ENCODE measurements at regions of chrX and their contacts with region 1.

Region 1: DNA sequence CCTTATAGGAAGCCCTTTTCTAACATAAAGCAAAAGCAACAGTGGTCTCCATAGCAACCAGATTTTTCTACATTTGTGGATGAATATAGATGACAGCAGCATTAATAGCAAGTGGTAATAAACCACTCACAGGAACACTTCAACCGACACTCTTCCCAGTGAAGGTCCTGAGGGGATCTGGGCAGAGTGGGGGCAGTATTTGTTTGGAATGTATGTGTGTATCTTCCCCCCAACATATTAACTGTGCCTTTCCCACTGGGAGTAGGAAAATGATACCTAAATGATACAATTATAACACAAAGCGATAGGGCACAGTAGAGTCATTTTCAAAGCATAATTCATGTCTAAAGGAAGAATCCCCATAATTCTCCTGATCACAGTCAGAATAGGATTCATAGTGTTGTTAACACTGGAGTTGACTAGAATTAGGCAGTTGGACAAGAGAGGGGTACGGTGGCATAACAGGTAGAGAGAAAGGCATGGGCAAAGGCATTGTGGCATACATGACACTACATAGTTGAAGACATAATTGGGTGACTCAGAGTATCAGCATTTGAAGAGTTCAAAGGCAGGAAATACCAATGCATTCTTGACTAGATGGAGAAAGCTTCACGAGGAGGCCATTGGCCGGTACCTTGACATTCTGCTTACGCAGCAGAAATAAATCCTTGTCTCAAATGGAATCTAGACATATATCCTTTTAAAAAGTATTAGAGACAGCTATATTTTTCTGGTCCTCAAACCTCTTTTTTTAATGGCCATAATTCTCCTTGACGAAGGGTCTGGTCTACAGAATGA is 15.2 kb downstream of the CAPN6 start:
- DNase-seq: no peak
- ATAC-seq: no peak
- H3K4me3 ChIP-seq: no peak overlapping the region
- H3K27ac ChIP-seq: no peak overlapping the region
- H3K4me1 ChIP-seq: no peaks in the 10 kb centered on the region
- H3K27me3 ChIP-seq: no peaks in the 10 kb centered on the region

Region 2: GRCh38 chrX:110920991-110921390 is 334.1 kb before region 1 on chrX:
- intact Hi-C with region 1: no loop called
- DNase-seq: no peak
- ATAC-seq: no peak
- H3K4me3 ChIP-seq: no peak overlapping the region
- H3K27ac ChIP-seq: no peak overlapping the region
- H3K4me1 ChIP-seq: no peaks in the 10 kb centered on the region
- H3K27me3 ChIP-seq: no peaks in the 10 kb centered on the region

Region 3: DNA sequence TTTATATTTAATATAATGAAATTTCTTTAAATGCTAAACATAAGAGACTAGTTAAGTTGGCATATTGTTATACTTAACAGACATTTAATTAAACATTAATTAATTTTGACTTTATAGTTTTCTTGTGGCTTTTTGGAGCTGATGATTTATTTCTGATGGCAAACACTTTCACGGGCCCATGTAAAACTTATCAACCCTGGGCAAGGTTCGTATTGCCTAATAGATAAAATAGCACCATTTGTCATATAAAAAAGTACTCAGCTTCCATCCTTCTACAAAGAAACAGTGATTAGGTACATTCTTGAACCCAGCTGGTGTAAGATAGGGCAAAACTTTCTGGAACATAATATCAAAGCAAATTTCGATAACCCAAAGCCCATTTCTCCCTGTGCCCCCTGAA is 95.9 kb before region 1 on chrX:
- intact Hi-C with region 1: loop called in 1 of 2 experiments (anchors 5 kb)
- DNase-seq: no peak
- ATAC-seq: no peak
- H3K4me3 ChIP-seq: no peak overlapping the region
- H3K27ac ChIP-seq: no peak overlapping the region
- H3K4me1 ChIP-seq: no peaks in the 10 kb centered on the region
- H3K27me3 ChIP-seq: no peaks in the 10 kb centered on the region

Region 4: GRCh38 chrX:111337067-111337637 is 82.1 kb after region 1 on chrX:
- intact Hi-C with region 1: loop called in 1 of 2 experiments (anchors 2 kb)
- DNase-seq: no peak
- ATAC-seq: no peak
- H3K4me3 ChIP-seq: no peak overlapping the region
- H3K27ac ChIP-seq: no peak overlapping the region
- H3K4me1 ChIP-seq: no peaks in the 10 kb centered on the region
- H3K27me3 ChIP-seq: peaks cover 1 to 4% of the 10 kb centered on the region in 2 donors

Region 5: GRCh38 chrX:111402344-111402743 is 147.2 kb after region 1 on chrX:
- intact Hi-C with region 1: no loop called
- DNase-seq: no peak
- ATAC-seq: no peak
- H3K4me3 ChIP-seq: no peak overlapping the region
- H3K27ac ChIP-seq: no peak overlapping the region
- H3K4me1 ChIP-seq: no peaks in the 10 kb centered on the region
- H3K27me3 ChIP-seq: no peaks in the 10 kb centered on the region